Adrenal gland (tissue), 19 donors: ENCODE measurements at regions of chr1 and their contacts with region 1.

Region 1: GRCh38 chr1:13667691-13668090 is 32.3 kb upstream of the PRDM2 start:
- DNase-seq: no peak
- H3K4me3 ChIP-seq: no peak overlapping the region
- H3K27ac ChIP-seq: no peak overlapping the region
- H3K4me1 ChIP-seq: no peaks in the 10 kb centered on the region
- H3K27me3 ChIP-seq: no peaks in the 10 kb centered on the region
- CTCF ChIP-seq: no peak
- POLR2A ChIP-seq: no peak

Region 2: GRCh38 chr1:13813398-13814012 is 145.8 kb after region 1 on chr1:
- intact Hi-C with region 1: loop called (anchors 5 kb)
- DNase-seq: peak in 5 of 7 donors; percentile 25 to 55 (median 37)
- H3K4me3 ChIP-seq: no peak overlapping the region
- H3K27ac ChIP-seq: no peak overlapping the region
- H3K4me1 ChIP-seq: peaks cover 3 to 6% of the 10 kb centered on the region in 2 donors
- H3K27me3 ChIP-seq: no peaks in the 10 kb centered on the region
- CTCF ChIP-seq: peak; percentile 37 to 62 (median 49)
- POLR2A ChIP-seq: no peak

Region 3: GRCh38 chr1:13960375-13960987 is 292.8 kb after region 1 on chr1:
- intact Hi-C with region 1: loop called (anchors 2 to 5 kb)
- DNase-seq: peak; percentile 50 to 91 (median 74)
- H3K4me3 ChIP-seq: no peak overlapping the region
- H3K27ac ChIP-seq: no peak overlapping the region
- H3K4me1 ChIP-seq: no peaks in the 10 kb centered on the region
- H3K27me3 ChIP-seq: no peaks in the 10 kb centered on the region
- CTCF ChIP-seq: peak; percentile 92 to 97 (median 93)
- POLR2A ChIP-seq: no peak